Posterior cingulate gyrus (tissue), 11 donors: ENCODE measurements at regions of chr10 and their contacts with region 1.

Region 1: DNA sequence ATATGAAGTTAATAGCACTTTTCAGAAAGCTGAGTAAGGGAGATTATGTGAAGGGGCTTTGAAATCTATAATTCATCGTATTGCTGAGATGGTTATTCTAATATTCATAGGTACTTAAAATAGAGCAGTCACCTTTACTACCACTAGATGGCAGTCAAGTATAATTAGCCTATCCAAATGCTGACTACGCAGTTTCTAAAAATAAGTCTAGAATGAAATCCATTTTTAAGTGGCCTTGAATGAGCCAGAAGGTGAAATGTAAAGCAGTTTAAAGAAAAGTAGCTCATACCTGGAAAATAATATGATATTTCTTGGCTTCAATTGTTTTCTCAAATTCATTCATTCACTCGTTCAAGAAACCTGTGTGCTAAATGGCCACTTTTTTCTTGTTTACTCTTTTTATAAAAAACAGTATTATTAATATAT is 1277.1 kb downstream of the GATA3 start:
- DNase-seq: no peak

Region 2: GRCh38 chr10:11036407-11037011 is 1704.9 kb after region 1 on chr10:
- intact Hi-C with region 1: loop called (anchors 10 kb)
- DNase-seq: peak in 1 of 10 donors; percentile 23